ENCODE measurements at regions of chr7 and their contacts with region 1.

Region 1: GRCh38 chr7:102248456-102249395 is 37.9 kb upstream of the SH2B2 start:
- DNase-seq: peak in 1 of 3 donors; percentile 58
- ATAC-seq: peak; percentile 20 to 44
- H3K4me3 ChIP-seq: no peak overlapping the region
- H3K27ac ChIP-seq: no peak overlapping the region
- H3K4me1 ChIP-seq: no peaks in the 10 kb centered on the region
- H3K27me3 ChIP-seq: no peaks in the 10 kb centered on the region

Region 2: GRCh38 chr7:102189756-102190155 is 59.0 kb before region 1 on chr7:
- intact Hi-C with region 1: loop called in 1 of 4 experiments (anchors 10 kb)
- DNase-seq: no peak
- ATAC-seq: peak in 1 of 2 donors; percentile 50
- H3K4me3 ChIP-seq: no peak overlapping the region
- H3K27ac ChIP-seq: no peak overlapping the region
- H3K4me1 ChIP-seq: no peaks in the 10 kb centered on the region
- H3K27me3 ChIP-seq: no peaks in the 10 kb centered on the region